ENCODE measurements at regions of chr6 and their contacts with region 1.

Region 1: DNA sequence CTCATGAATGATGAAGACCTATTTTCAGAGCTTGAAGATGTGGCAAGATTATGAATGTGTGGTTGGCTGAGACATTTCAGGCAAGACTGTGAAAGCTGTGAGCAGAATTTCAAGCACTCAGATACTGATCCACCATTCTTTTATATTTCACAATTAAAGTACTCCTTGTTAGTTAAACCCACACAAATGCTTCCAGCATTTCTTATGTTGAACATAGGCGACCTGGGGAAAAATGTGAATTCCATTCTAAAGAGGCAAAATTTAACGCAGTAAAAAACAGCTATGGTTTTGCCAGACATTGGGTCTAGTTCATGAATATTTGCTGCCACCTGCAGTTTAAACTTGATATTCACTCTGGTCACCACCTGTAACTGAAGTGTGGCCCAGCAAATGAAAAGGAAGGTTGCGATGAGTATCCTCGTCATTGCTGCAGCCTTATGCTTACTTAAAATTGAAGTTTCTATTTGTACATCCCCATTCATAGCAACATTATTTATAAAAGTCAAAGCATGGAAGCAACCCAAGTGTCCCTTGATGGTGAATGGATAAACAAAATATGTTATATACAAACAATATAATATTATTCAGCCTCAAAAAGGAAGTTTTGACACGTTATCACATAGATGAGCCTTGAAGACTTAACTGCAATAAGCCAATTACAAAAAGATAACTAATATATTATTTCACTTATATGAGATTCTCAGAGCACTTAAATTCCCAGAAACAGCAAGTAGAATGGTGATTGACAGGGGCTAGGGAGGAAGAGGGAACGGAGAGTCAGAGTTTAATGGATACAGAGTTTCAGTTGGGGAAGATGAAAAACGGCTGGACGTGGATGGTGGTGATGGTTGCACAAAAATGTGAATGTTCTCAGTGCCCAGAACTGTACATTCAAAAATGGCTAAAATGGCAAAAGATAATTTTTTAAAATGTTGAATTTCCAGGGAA is 32.4 kb upstream of the FAM184A start:
- DNase-seq: no peak
- H3K4me3 ChIP-seq: no peak overlapping the region
- H3K27ac ChIP-seq: no peak overlapping the region
- H3K4me1 ChIP-seq: peaks cover 0 to 2% (median 0%) of the 10 kb centered on the region in 4 experiments; a peak in 3 of 7 replicates
- H3K27me3 ChIP-seq: peaks cover 0 to 1% (median 0%) of the 10 kb centered on the region in 4 experiments; a peak in 1 of 7 replicates
- CTCF ChIP-seq: peak in 2 of 3 experiments; percentile 61 to 66; a peak in 3 of 4 replicates
- EP300 ChIP-seq: no peak
- POLR2A ChIP-seq: no peak
- RAD21 ChIP-seq: peak; percentile 86 to 92

Region 2: GRCh38 chr6:118968416-118968815 is 142.5 kb before region 1 on chr6:
- CTCF ChIA-PET with region 1: interaction called, 146 read pairs
- POLR2A ChIA-PET with region 1: interaction called, 3 read pairs
- DNase-seq: no peak
- H3K4me3 ChIP-seq: no peak overlapping the region
- H3K27ac ChIP-seq: no peak overlapping the region
- H3K4me1 ChIP-seq: peaks cover 0 to 5% (median 2%) of the 10 kb centered on the region in 4 experiments; a peak in 2 of 7 replicates
- H3K27me3 ChIP-seq: no peaks in the 10 kb centered on the region
- CTCF ChIP-seq: peak in 2 of 3 experiments; percentile 23 to 42; a peak in 2 of 4 replicates
- EP300 ChIP-seq: no peak
- POLR2A ChIP-seq: no peak
- RAD21 ChIP-seq: peak; percentile 66 to 68

Region 3: GRCh38 chr6:119073307-119074051 is 37.4 kb before region 1 on chr6:
- CTCF ChIA-PET with region 1: interaction called, 14 read pairs
- POLR2A ChIA-PET with region 1: no interaction called
- DNase-seq: no peak
- H3K4me3 ChIP-seq: no peak overlapping the region
- H3K27ac ChIP-seq: no peak overlapping the region
- H3K4me1 ChIP-seq: no peaks in the 10 kb centered on the region; a peak in 1 of 7 replicates
- H3K27me3 ChIP-seq: 0 out of 7 replicates have a peak, but pooled peaks cover 0 to 4% (median 2%) of the 10 kb centered on the region in 4 experiments
- CTCF ChIP-seq: no peak
- EP300 ChIP-seq: no peak
- POLR2A ChIP-seq: no peak
- RAD21 ChIP-seq: no peak

Region 4: GRCh38 chr6:119096721-119097565 is 13.9 kb before region 1 on chr6:
- CTCF ChIA-PET with region 1: interaction called, 21 read pairs
- POLR2A ChIA-PET with region 1: no interaction called
- DNase-seq: no peak
- H3K4me3 ChIP-seq: no peak overlapping the region
- H3K27ac ChIP-seq: no peak overlapping the region
- H3K4me1 ChIP-seq: no peaks in the 10 kb centered on the region
- H3K27me3 ChIP-seq: no peaks in the 10 kb centered on the region
- CTCF ChIP-seq: no peak
- EP300 ChIP-seq: no peak
- POLR2A ChIP-seq: no peak
- RAD21 ChIP-seq: no peak

Region 5: GRCh38 chr6:119186490-119186889 is 75.6 kb after region 1 on chr6:
- CTCF ChIA-PET with region 1: no interaction called
- POLR2A ChIA-PET with region 1: no interaction called
- DNase-seq: no peak
- H3K4me3 ChIP-seq: no peak overlapping the region
- H3K27ac ChIP-seq: no peak overlapping the region
- H3K4me1 ChIP-seq: peaks cover 0 to 2% (median 0%) of the 10 kb centered on the region in 4 experiments; a peak in 1 of 7 replicates
- H3K27me3 ChIP-seq: no peaks in the 10 kb centered on the region
- CTCF ChIP-seq: no peak
- EP300 ChIP-seq: no peak
- POLR2A ChIP-seq: no peak
- RAD21 ChIP-seq: no peak

Region 6: DNA sequence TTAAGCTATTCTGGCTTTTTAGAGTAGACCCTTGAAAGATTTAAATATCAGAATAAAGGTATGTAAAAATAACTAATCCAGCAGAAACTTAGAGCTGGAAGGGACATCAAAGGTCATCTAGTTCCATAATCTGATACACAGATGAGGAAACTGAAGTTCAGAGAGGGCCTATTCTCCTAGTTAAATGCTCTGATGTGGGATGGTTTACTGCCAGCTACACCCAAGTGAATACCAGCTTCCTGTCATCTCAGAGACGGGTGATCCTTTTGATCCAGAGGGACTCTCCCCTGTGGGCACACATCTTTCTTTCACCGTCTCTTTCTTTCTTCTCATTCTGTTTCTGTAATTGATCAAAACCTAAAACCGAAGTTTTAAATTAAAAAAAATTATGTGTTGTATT is 144.6 kb after region 1 on chr6:
- CTCF ChIA-PET with region 1: no interaction called
- POLR2A ChIA-PET with region 1: no interaction called
- DNase-seq: no peak
- H3K4me3 ChIP-seq: no peak overlapping the region
- H3K27ac ChIP-seq: no peak overlapping the region
- H3K4me1 ChIP-seq: no peaks in the 10 kb centered on the region
- H3K27me3 ChIP-seq: no peaks in the 10 kb centered on the region
- CTCF ChIP-seq: no peak
- EP300 ChIP-seq: no peak
- POLR2A ChIP-seq: no peak
- RAD21 ChIP-seq: no peak